ENCODE measurements at regions of chr1 and their contacts with region 1.

Region 1: DNA sequence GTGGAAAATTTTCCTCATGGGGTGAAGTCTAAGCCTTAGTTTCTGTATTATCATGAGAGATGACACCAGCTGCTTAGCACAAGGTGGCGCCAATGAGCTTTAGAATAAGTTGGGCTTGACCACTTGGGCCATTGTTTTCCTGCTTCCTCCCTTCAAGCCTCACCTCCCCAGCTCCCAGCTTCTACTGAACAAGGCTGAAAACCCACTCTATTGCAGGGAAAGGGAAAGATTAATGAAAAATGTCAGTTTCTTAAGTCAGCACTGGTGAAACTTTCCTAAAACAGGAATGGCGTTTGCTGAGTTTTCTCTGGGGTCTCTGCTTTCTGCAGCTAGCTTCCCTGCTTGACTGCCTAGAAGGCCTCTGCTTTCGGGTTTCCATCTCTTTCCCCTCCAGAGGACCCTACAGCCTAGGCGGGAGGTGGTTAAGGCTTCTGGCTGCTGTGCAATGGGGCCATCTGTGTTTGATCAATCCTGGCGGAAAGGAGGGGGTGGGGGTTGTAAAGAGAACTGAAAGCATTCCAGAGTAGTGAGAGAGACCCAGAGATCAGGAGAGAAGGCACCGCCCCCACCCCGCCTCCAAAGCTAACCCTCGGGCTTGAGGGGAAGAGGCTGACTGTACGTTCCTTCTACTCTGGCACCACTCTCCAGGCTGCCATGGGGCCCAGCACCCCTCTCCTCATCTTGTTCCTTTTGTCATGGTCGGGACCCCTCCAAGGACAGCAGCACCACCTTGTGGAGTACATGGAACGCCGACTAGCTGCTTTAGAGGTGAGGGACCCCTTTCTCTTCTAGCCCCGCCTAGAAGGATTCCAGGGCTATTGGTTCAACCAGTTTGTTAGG is at the start of gene OLFML3:
- DNase-seq: peak; percentile 47 to 93
- H3K4me3 ChIP-seq: peak within 1 kb of the TSS; percentile 34 to 52
- H3K27ac ChIP-seq: peak within 1 kb of the TSS; percentile 46 to 77
- H3K4me1 ChIP-seq: peaks cover 15 to 32% of the 10 kb centered on the region in 2 donors
- H3K27me3 ChIP-seq: no peaks in the 10 kb centered on the region
- CTCF ChIP-seq: peak; percentile 59 to 75 (median 70)
- total RNA-seq, gene OLFML3: 26.4 TPM

Region 2: GRCh38 chr1:113928941-113929749 is 49.9 kb before region 1 on chr1 and contains the start of gene HIPK1:
- intact Hi-C with region 1: loop called (anchors 5 kb)
- DNase-seq: peak; percentile 67 to 96
- H3K4me3 ChIP-seq: peak within 1 kb of the TSS; percentile 83 to 90
- H3K27ac ChIP-seq: peak within 1 kb of the TSS; percentile 92 to 94
- H3K4me1 ChIP-seq: peaks cover 4 to 33% of the 10 kb centered on the region in 2 donors
- H3K27me3 ChIP-seq: no peaks in the 10 kb centered on the region
- CTCF ChIP-seq: peak in 1 of 3 experiments; percentile 35
- total RNA-seq, gene HIPK1: 41.7 TPM

Region 3: DNA sequence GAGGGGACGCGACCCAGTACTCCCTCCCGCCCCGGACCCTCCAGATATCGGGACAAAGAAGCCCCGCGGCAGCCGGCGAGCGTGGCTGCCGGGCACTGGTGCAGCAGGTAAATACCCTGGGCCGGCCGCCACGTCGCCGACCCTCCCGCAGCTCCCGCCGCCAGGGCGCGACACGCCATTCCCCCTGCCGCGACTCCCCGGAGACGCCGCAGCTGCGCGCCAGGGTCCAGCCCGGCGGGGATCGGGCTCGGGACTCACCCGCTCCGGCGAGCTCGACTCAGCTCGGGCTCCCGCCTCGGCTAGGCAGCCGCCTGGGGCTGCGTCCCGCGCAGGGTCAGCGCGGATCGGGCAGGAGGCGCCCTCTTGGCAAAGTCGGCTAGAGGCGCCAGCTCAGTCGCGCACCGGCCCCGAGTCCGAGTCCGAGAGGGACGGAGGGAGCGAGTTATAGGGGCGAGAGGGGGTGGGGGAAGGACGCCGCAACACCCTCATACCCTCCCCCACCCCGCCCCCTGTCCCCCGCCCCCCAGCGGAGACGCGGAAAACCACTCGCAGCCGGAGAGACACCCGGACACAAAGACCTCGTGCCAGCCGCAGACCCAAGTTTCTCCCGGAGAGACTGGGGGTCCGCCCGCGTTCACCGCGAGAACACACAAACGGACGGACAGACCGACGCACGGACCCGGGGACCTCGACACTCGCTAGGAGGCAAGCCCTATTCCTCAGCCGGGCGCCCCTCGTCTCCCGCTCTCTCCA is 173.6 kb after region 1 on chr1:
- intact Hi-C with region 1: loop called (anchors 5 kb)
- DNase-seq: no peak
- H3K4me3 ChIP-seq: peak overlapping the region; percentile 41 to 61
- H3K27ac ChIP-seq: no peak overlapping the region
- H3K4me1 ChIP-seq: peaks cover 7 to 24% of the 10 kb centered on the region in 2 donors
- H3K27me3 ChIP-seq: peaks cover 30% of the 10 kb centered on the region
- CTCF ChIP-seq: no peak

Region 4: DNA sequence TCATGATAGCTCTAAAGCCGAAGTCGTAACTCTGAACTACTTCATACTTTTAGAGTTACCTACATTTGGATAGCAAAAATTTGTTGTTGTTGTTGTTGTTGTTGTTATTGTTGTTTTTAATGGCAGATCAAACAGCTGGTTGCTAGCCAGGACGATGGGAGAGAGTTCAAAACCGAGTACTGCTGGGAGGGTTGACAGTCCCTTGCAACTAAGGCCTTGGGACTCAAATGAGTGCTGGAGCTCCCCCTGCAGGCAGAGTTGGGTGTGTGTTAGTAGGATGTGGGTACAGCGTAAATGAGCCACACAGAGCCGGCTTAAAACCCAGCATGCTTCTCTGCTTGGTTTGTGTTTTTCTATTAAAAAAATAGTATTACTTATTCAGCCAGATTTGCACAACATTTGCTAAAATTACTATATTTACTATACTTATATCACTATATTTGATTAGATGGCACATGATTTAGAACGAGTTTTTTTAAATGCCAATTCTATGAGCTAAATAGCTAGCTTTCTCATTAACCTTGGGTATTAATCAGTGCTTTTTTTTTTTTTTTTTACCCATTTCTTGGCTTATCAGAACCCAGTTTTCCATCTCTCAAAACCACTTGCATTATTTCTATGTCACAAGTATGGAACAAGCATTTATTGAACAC is 303.8 kb after region 1 on chr1:
- intact Hi-C with region 1: loop called (anchors 1 kb)
- DNase-seq: peak; percentile 48 to 93
- H3K4me3 ChIP-seq: no peak overlapping the region
- H3K27ac ChIP-seq: no peak overlapping the region
- H3K4me1 ChIP-seq: no peaks in the 10 kb centered on the region
- H3K27me3 ChIP-seq: no peaks in the 10 kb centered on the region
- CTCF ChIP-seq: peak; percentile 73 to 89 (median 77)

Region 5: GRCh38 chr1:114346480-114347029 is 367.5 kb after region 1 on chr1:
- intact Hi-C with region 1: loop called (anchors 5 kb)
- DNase-seq: peak; percentile 74 to 98
- H3K4me3 ChIP-seq: peak overlapping the region; percentile 69 to 78
- H3K27ac ChIP-seq: peak overlapping the region; percentile 88 to 94
- H3K4me1 ChIP-seq: peaks cover 6 to 8% of the 10 kb centered on the region in 2 donors
- H3K27me3 ChIP-seq: no peaks in the 10 kb centered on the region
- CTCF ChIP-seq: peak; percentile 100

Region 6: DNA sequence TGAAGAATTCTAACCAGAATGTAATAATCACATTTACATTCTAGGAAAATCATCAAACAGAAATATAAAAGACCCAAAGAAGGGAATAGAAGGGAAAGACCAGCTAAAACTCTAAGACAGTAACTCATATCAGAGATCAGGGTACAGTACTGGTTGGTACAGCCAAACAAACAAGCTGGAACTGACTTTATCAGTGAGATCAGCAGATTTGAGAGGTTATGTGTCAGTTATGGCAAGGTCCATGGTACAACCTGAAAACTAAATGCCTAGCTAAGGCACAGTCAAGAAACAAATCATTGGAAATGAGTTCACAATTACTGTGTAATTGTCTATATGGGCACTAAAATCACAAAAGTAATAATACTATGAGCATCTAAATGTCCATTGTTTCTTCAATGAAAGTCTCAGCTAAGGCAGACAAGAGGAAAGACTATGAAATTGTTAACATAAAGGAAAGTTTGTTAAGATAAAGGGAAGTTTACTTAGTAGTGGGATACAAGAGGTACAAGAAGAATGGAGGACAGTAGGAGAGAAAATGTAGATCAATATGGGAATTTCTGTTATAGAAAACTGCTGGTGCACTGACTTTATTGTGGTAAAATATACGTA is 456.1 kb after region 1 on chr1:
- intact Hi-C with region 1: loop called (anchors 10 kb)
- DNase-seq: no peak
- H3K4me3 ChIP-seq: no peak overlapping the region
- H3K27ac ChIP-seq: no peak overlapping the region
- H3K4me1 ChIP-seq: no peaks in the 10 kb centered on the region
- H3K27me3 ChIP-seq: no peaks in the 10 kb centered on the region
- CTCF ChIP-seq: no peak

Region 7: GRCh38 chr1:114757455-114758250 is 778.6 kb after region 1 on chr1 and contains the start of gene CSDE1:
- intact Hi-C with region 1: loop called (anchors 10 kb)
- DNase-seq: peak; percentile 90 to 98
- H3K4me3 ChIP-seq: peak within 1 kb of the TSS; percentile 81 to 89
- H3K27ac ChIP-seq: peak within 1 kb of the TSS; percentile 99
- H3K4me1 ChIP-seq: peaks cover 0 to 29% of the 10 kb centered on the region in 2 donors
- H3K27me3 ChIP-seq: no peaks in the 10 kb centered on the region
- CTCF ChIP-seq: peak in 2 of 3 experiments; percentile 20 to 27
- total RNA-seq, gene CSDE1: 290 TPM

Measured in ascending aorta (tissue), 2 donors.